ENCODE measurements at regions of chr5 and their contacts with region 1.

Region 1: GRCh38 chr5:135289651-135290050 is 109.4 kb downstream of the MACROH2A1 start:
- DNase-seq: no peak

Region 2: GRCh38 chr5:135246923-135247795 is 42.5 kb before region 1 on chr5:
- intact Hi-C with region 1: no loop called
- DNase-seq: no peak

Region 3: DNA sequence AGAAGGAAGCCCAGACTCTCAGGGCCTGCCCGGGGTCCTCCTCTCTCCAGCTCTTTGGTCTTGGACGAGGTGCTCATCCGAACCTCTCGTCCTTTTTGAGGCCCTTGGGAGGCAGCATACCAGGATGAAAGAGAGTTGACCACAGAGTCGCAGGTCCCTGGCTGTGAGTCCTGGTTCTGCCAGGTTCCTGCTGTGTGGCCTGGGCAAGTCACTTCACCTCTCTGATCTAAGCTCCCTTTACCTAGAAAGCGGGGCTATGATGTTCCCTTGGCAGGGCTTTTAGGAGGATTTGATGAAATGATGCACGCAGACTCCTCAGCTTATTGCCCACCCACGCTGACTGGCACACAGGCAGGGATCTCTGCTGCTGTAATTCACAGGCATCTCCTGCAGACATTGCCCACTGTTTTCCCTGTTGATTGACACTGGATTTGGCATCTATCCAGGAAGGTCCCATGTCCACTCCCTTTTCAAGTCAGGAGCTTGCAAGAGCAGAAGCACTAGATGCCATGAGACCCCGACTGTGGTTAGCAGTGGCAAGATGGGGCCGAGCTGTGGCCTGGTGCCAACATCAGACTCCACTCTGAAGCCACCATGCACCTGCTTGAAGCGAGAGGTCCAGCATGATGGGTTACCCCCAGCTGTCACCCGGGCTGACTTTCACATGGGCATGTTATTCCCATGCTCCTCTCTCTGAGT is 37.9 kb after region 1 on chr5:
- intact Hi-C with region 1: loop called in 1 of 2 experiments (anchors 1 kb)
- DNase-seq: no peak

Measured in posterior vena cava (tissue), 2 donors.